Activated CD4-positive, alpha-beta T cell treated with anti-CD3 and anti-CD28 coated beads for 36 hours (primary cell): ENCODE measurements at regions of chr1 and their contacts with region 1.

Region 1: DNA sequence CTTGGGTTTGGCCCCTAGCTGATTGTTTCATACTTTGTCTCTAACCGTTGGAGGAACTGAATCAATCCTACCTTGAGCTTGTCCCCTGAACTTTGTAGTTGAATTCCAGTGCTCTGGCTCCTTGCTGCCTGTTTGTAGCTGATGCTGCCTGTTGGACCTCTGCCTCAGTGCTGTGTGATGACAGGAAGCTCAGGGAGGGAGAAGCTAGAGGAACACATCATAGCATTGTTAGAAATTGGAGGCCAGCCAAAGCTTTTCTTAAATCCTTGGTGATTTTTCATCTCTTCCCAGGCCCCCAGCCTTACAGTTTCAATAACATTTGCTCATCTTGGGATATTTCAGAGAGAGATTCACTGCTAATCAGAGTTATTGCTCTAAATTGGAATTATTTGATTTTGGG is 34.0 kb downstream of the MACF1 start:
- DNase-seq: no peak
- ATAC-seq: no peak
- H3K4me3 Mint-ChIP-seq: no peak overlapping the region
- H3K27ac Mint-ChIP-seq: peak overlapping the region; percentile 13
- H3K4me1 Mint-ChIP-seq: peaks cover 36% of the 10 kb centered on the region
- H3K27me3 Mint-ChIP-seq: no peaks in the 10 kb centered on the region

Region 2: GRCh38 chr1:39003794-39004193 is 234.7 kb before region 1 on chr1:
- CTCF ChIA-PET with region 1: no interaction called
- POLR2A ChIA-PET with region 1: interaction called, 10 read pairs
- intact Hi-C with region 1: no loop called
- DNase-seq: no peak
- ATAC-seq: peak; percentile 69
- H3K4me3 Mint-ChIP-seq: no peak overlapping the region
- H3K27ac Mint-ChIP-seq: peak overlapping the region; percentile 57
- H3K4me1 Mint-ChIP-seq: peaks cover 44% of the 10 kb centered on the region
- H3K27me3 Mint-ChIP-seq: no peaks in the 10 kb centered on the region

Region 3: DNA sequence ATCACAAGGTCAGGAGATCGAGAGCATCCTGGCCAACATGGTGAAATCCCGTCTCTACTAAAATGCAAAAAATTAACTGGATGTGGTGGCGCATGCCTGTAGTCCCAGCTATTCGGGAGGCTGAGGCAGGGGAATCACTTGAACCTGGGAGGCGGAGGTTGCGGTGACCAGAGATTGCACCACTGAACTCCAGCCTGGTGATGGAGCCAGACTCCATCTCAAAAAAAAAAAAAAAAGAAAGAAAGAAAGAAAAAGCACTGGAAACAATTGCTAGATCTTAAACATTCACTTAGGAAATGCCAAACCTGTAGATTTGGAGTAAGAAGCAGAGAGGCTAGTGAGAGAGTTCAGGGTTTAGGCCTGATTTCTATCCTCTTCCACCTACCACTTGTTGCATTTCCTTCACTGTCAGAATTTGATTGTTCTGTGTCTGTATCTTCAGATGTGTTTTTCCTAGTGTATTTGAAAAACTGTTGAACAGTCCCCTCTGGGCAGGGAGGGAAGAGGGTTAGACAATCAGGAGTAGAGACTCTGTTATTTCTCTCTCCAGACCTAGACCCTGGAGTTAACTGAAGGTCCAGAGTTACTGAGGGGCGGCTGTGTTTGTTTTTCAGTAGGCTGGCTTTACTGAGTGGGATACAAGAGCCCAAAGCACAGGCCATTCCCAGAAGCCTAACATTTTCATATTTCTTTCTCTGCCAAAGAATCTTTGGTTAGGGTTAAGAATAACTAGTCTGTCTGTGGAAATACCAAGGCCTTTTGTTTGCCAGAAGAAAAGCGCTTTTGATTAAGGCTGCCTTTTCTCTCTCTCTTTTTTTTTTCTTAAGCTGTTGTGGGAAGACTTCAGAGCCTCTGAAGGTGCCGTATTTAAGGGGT is 65.1 kb before region 1 on chr1:
- CTCF ChIA-PET with region 1: no interaction called
- POLR2A ChIA-PET with region 1: no interaction called
- intact Hi-C with region 1: no loop called
- DNase-seq: no peak
- ATAC-seq: no peak
- H3K4me3 Mint-ChIP-seq: no peak overlapping the region
- H3K27ac Mint-ChIP-seq: no peak overlapping the region
- H3K4me1 Mint-ChIP-seq: no peaks in the 10 kb centered on the region
- H3K27me3 Mint-ChIP-seq: no peaks in the 10 kb centered on the region

Region 4: GRCh38 chr1:39816415-39817090 is 578.1 kb after region 1 on chr1:
- CTCF ChIA-PET with region 1: no interaction called
- POLR2A ChIA-PET with region 1: no interaction called
- intact Hi-C with region 1: no loop called
- DNase-seq: peak; percentile 81
- ATAC-seq: peak; percentile 76
- H3K4me3 Mint-ChIP-seq: peak overlapping the region; percentile 9
- H3K27ac Mint-ChIP-seq: peak overlapping the region; percentile 49
- H3K4me1 Mint-ChIP-seq: peaks cover 13% of the 10 kb centered on the region
- H3K27me3 Mint-ChIP-seq: peaks cover 4% of the 10 kb centered on the region